ENCODE measurements at regions of chr2 and their contacts with region 1.

Region 1: DNA sequence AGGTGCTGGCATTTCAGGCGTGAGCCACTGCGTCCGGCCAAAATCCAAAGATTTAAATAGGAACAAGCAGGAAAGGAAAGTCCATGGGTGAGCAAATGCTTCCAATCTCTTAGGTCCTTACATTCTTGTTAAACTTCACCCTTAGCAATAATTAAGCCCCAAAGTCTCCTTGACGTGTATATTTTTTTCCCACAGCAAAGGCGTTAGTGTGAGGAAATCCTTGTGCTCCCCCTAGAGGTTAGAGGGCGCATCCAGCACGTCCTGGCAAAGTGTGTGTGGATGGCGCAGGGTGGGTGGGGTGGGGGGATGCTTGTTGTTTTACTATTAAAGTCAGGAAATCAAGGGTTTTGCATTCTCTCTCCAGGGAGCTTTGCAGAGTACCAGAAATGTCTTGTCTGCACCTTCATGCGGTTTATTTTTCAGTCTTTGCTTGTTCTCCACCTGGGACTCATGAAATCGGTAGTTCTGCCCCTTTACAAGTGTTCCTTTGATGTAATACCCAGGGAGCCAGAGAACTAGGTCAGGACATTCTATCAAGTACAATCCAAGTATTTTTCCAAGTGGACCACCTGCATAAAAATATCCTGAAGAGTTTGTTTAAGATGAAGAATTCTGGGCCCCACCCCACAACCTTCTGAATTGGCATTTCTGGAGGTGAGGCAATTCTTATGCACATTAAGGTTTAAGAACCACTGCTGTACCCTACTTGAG is 22.2 kb upstream of the ITSN2 start:
- DNase-seq: peak in 8 of 9 donors; percentile 37 to 75 (median 66)
- ATAC-seq: peak; percentile 95
- H3K4me3 ChIP-seq: no peak overlapping the region
- H3K4me3 Mint-ChIP-seq: no peak overlapping the region
- H3K27ac ChIP-seq: no peak overlapping the region
- H3K27ac Mint-ChIP-seq: no peak overlapping the region
- H3K4me1 ChIP-seq: no peaks in the 10 kb centered on the region
- H3K4me1 Mint-ChIP-seq: peaks cover 0 to 2% (median 0%) of the 10 kb centered on the region in 7 donors
- H3K27me3 ChIP-seq: no peaks in the 10 kb centered on the region
- H3K27me3 Mint-ChIP-seq: peaks cover 0 to 3% (median 0%) of the 10 kb centered on the region in 5 donors

Region 2: GRCh38 chr2:23824777-23825212 is 557.7 kb before region 1 on chr2:
- CTCF ChIA-PET with region 1: no interaction called
- POLR2A ChIA-PET with region 1: no interaction called
- intact Hi-C with region 1: loop called (anchors 1 to 2 kb)
- DNase-seq: peak in 7 of 9 donors; percentile 18 to 60 (median 50)
- ATAC-seq: peak; percentile 77
- H3K4me3 ChIP-seq: no peak overlapping the region
- H3K4me3 Mint-ChIP-seq: no peak overlapping the region
- H3K27ac ChIP-seq: no peak overlapping the region
- H3K27ac Mint-ChIP-seq: no peak overlapping the region
- H3K4me1 ChIP-seq: no peaks in the 10 kb centered on the region
- H3K4me1 Mint-ChIP-seq: peaks cover 0 to 4% (median 0%) of the 10 kb centered on the region in 7 donors
- H3K27me3 ChIP-seq: no peaks in the 10 kb centered on the region
- H3K27me3 Mint-ChIP-seq: no peaks in the 10 kb centered on the region

Region 3: DNA sequence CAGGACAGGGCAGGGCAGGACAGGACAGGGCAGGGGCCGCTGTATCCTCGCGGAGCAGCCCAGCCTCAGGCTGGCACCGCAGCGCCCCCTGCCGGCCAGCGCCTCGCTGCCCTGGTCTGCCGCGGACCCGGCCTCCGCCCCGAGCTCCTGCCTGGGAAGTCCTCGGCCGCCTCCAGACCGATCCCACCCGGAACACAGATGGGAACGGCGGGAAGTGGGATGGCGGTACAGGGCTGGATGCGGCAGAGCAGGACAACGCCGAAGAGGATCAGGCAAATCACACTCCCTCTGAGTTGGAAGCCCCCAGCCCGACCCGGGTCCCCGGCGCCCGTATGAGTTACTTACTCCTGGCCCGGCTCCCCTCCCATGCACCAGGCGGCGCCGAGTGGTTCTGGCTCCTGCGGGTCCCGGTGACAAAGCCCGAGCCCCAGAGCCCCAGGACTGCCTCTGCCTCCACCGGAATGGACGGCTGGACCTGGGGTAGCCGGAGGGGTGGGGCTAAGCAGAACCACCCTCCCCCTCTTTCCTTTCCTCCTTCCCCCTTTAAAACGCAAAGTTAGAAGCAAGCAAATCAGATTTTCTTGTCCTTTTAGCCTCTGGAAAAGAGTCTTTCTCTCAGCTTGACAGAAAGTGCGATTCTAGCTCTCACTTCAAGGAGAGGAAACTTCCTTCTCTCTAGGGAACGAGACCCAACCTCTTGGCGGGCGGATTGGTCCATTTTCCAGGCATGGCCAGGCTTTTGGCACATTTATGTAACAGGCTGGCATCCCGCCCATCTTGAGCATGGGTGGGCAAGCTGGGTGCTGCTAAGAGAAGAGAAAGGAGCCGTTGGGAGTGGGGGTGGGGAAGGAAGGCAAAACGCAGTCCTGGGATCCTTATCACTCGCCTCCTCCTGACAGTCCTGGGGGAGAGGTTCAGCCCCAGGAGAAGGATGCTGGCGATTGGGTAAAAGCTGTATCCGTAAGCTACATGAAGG is 297.8 kb before region 1 on chr2 and contains the start of gene TP53I3:
- CTCF ChIA-PET with region 1: no interaction called
- POLR2A ChIA-PET with region 1: no interaction called
- intact Hi-C with region 1: loop called (anchors 1 kb)
- DNase-seq: peak; percentile 59 to 93 (median 80)
- ATAC-seq: peak; percentile 96
- H3K4me3 ChIP-seq: peak within 1 kb of the TSS; percentile 61
- H3K4me3 Mint-ChIP-seq: peak within 1 kb of the TSS; percentile 81 to 93 (median 88)
- H3K27ac ChIP-seq: peak within 1 kb of the TSS; percentile 28
- H3K27ac Mint-ChIP-seq: peak within 1 kb of the TSS in 8 of 9 donors; percentile 49 to 83 (median 65)
- H3K4me1 ChIP-seq: peaks cover 5 to 8% of the 10 kb centered on the region in 2 donors
- H3K4me1 Mint-ChIP-seq: peaks cover 10 to 21% (median 17%) of the 10 kb centered on the region in 7 donors
- H3K27me3 ChIP-seq: no peaks in the 10 kb centered on the region
- H3K27me3 Mint-ChIP-seq: no peaks in the 10 kb centered on the region
- total RNA-seq, gene TP53I3: 0.49 to 5.0 (median 1.7) TPM

Region 4: GRCh38 chr2:24237313-24237712 is 145.2 kb before region 1 on chr2:
- CTCF ChIA-PET with region 1: interaction called, 4 read pairs
- POLR2A ChIA-PET with region 1: no interaction called
- intact Hi-C with region 1: loop called in 1 of 2 experiments (anchors 1 kb)
- DNase-seq: no peak
- ATAC-seq: no peak
- H3K4me3 ChIP-seq: no peak overlapping the region
- H3K4me3 Mint-ChIP-seq: no peak overlapping the region
- H3K27ac ChIP-seq: no peak overlapping the region
- H3K27ac Mint-ChIP-seq: peak overlapping the region in 4 of 9 donors; percentile 0 to 29 (median 14)
- H3K4me1 ChIP-seq: no peaks in the 10 kb centered on the region
- H3K4me1 Mint-ChIP-seq: peaks cover 0 to 9% (median 0%) of the 10 kb centered on the region in 7 donors
- H3K27me3 ChIP-seq: no peaks in the 10 kb centered on the region
- H3K27me3 Mint-ChIP-seq: no peaks in the 10 kb centered on the region

Region 5: GRCh38 chr2:24315669-24316068 is 66.8 kb before region 1 on chr2:
- CTCF ChIA-PET with region 1: interaction called, 3 read pairs
- POLR2A ChIA-PET with region 1: no interaction called
- intact Hi-C with region 1: loop called in 1 of 2 experiments (anchors 5 kb)
- DNase-seq: no peak
- ATAC-seq: peak; percentile 16
- H3K4me3 ChIP-seq: no peak overlapping the region
- H3K4me3 Mint-ChIP-seq: no peak overlapping the region
- H3K27ac ChIP-seq: no peak overlapping the region
- H3K27ac Mint-ChIP-seq: peak overlapping the region in 5 of 9 donors; percentile 1 to 69 (median 49)
- H3K4me1 ChIP-seq: no peaks in the 10 kb centered on the region
- H3K4me1 Mint-ChIP-seq: peaks cover 10 to 26% (median 19%) of the 10 kb centered on the region in 7 donors
- H3K27me3 ChIP-seq: no peaks in the 10 kb centered on the region
- H3K27me3 Mint-ChIP-seq: no peaks in the 10 kb centered on the region

Region 6: GRCh38 chr2:24543252-24543651 is 160.7 kb after region 1 on chr2:
- CTCF ChIA-PET with region 1: no interaction called
- POLR2A ChIA-PET with region 1: no interaction called
- intact Hi-C with region 1: no loop called
- DNase-seq: no peak
- ATAC-seq: no peak
- H3K4me3 ChIP-seq: no peak overlapping the region
- H3K4me3 Mint-ChIP-seq: peak overlapping the region in 3 of 10 donors; percentile 2 to 37 (median 6)
- H3K27ac ChIP-seq: no peak overlapping the region
- H3K27ac Mint-ChIP-seq: no peak overlapping the region
- H3K4me1 ChIP-seq: peaks cover 0 to 6% of the 10 kb centered on the region in 2 donors
- H3K4me1 Mint-ChIP-seq: peaks cover 16 to 59% (median 40%) of the 10 kb centered on the region in 7 donors
- H3K27me3 ChIP-seq: no peaks in the 10 kb centered on the region
- H3K27me3 Mint-ChIP-seq: no peaks in the 10 kb centered on the region

Measured in naive thymus-derived CD4-positive, alpha-beta T cell (primary cell).